SK-N-SH (cell line): ENCODE measurements at regions of chr14 and their contacts with region 1.

Region 1: GRCh38 chr14:21014761-21015190 is 10.1 kb downstream of the NDRG2 start:
- DNase-seq: peak; percentile 75
- H3K4me3 ChIP-seq: no peak overlapping the region; a peak in 1 of 4 replicates
- H3K27ac ChIP-seq: no peak overlapping the region
- H3K4me1 ChIP-seq: no peaks in the 10 kb centered on the region; a peak in 1 of 4 replicates
- H3K27me3 ChIP-seq: peaks cover 15% of the 10 kb centered on the region
- CTCF ChIP-seq: peak; percentile 89
- EP300 ChIP-seq: no peak
- RAD21 ChIP-seq: peak; percentile 96

Region 2: DNA sequence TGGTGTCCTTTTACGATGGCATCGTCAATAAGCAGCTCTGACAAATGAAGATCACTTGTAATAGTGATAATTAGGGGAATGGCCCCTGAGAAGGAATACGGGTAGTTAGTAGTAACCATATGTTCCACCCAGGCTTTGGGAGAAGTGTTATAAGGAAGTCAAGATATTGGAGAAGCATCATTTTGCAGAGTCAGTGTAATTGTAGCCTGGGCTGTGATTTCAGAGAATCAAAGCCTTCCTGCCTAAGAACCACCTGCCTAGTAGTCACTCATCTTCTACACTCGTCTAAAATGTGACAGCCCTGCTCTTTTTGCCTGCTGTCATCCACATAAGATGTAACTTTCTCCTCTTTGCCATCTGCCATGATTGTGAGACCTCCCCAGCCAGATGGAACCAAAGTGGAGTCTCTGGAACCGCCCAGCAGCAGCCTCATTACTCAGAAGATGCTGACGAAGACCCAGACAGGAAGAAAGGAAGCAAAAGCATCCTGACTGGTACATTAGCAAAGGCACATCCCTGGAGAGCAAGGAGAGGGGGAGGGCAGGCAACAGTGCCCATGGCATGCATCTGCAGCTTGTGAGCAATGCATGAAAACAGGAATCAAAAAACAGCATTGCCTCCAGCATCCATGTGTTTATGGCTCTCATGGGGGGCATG is 281.7 kb before region 1 on chr14:
- CTCF ChIA-PET with region 1: no interaction called
- POLR2A ChIA-PET with region 1: no interaction called
- DNase-seq: no peak
- H3K4me3 ChIP-seq: no peak overlapping the region
- H3K27ac ChIP-seq: no peak overlapping the region
- H3K4me1 ChIP-seq: no peaks in the 10 kb centered on the region
- H3K27me3 ChIP-seq: peaks cover 8% of the 10 kb centered on the region; the same call in 1 of the 2 replicates
- CTCF ChIP-seq: no peak
- EP300 ChIP-seq: no peak
- RAD21 ChIP-seq: no peak

Region 3: GRCh38 chr14:20855652-20856291 is 159.0 kb before region 1 on chr14:
- CTCF ChIA-PET with region 1: no interaction called
- POLR2A ChIA-PET with region 1: no interaction called
- DNase-seq: peak; percentile 42
- H3K4me3 ChIP-seq: no peak overlapping the region
- H3K27ac ChIP-seq: no peak overlapping the region
- H3K4me1 ChIP-seq: peaks cover 0 to 3% of the 10 kb centered on the region in 2 experiments; a peak in 1 of 4 replicates
- H3K27me3 ChIP-seq: peaks cover 43% of the 10 kb centered on the region; the same call in 1 of the 2 replicates
- CTCF ChIP-seq: peak; percentile 66
- EP300 ChIP-seq: no peak
- RAD21 ChIP-seq: peak; percentile 60

Region 4: DNA sequence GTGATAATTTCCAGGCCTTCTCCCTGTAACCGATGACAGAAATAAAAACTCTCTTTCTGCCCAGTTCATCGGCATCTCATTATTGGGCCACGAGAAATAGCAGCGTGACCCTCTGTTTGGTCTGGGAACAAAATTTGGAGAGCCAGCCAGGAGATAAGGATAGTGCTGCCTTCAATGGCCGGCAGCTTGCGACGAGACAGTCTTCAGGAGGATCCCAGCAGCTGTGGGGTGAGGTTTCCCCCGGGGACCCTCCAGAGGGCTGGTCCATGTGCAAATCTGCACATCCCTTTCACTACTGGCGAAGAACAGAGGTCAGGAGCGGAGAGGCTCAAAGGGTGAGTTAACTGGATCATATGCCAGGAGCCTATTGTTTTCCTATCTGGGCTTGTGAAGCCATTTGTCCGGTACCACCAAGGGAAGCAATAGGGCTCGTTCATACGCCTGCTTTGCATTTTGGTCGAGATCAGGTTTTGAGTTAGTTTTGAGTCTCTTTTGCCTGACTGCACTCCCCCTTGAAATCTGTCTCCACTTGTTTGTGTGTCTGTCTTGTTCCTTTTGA is 10.9 kb before region 1 on chr14:
- CTCF ChIA-PET with region 1: interaction called, 83 read pairs
- POLR2A ChIA-PET with region 1: no interaction called
- DNase-seq: no peak
- H3K4me3 ChIP-seq: no peak overlapping the region
- H3K27ac ChIP-seq: no peak overlapping the region
- H3K4me1 ChIP-seq: no peaks in the 10 kb centered on the region; a peak in 1 of 4 replicates
- H3K27me3 ChIP-seq: no peaks in the 10 kb centered on the region
- CTCF ChIP-seq: no peak
- EP300 ChIP-seq: no peak
- RAD21 ChIP-seq: no peak

Region 5: GRCh38 chr14:21039585-21040369 is 25.0 kb after region 1 on chr14:
- CTCF ChIA-PET with region 1: interaction called, 248 read pairs
- POLR2A ChIA-PET with region 1: interaction called, 9 read pairs
- DNase-seq: peak; percentile 56
- H3K4me3 ChIP-seq: no peak overlapping the region; a peak in 1 of 4 replicates
- H3K27ac ChIP-seq: no peak overlapping the region
- H3K4me1 ChIP-seq: peaks cover 13 to 20% of the 10 kb centered on the region in 2 experiments; a peak in 3 of 4 replicates
- H3K27me3 ChIP-seq: no peaks in the 10 kb centered on the region; the same call in 1 of the 2 replicates
- CTCF ChIP-seq: peak; percentile 67
- EP300 ChIP-seq: no peak
- RAD21 ChIP-seq: peak; percentile 86

Region 6: GRCh38 chr14:21071225-21072030 is 56.7 kb after region 1 on chr14:
- CTCF ChIA-PET with region 1: interaction called, 54 read pairs
- POLR2A ChIA-PET with region 1: interaction called, 15 read pairs
- DNase-seq: peak; percentile 95
- H3K4me3 ChIP-seq: peak overlapping the region; percentile 81 to 89
- H3K27ac ChIP-seq: peak overlapping the region; percentile 98 to 99
- H3K4me1 ChIP-seq: peaks cover 22 to 37% of the 10 kb centered on the region in 2 experiments
- H3K27me3 ChIP-seq: no peaks in the 10 kb centered on the region
- CTCF ChIP-seq: no peak
- EP300 ChIP-seq: peak in 1 of 2 experiments; percentile 25; a peak in 1 of 4 replicates
- RAD21 ChIP-seq: 0 out of 2 replicates have a peak, but pooled peaks have one; percentile 2

Region 7: DNA sequence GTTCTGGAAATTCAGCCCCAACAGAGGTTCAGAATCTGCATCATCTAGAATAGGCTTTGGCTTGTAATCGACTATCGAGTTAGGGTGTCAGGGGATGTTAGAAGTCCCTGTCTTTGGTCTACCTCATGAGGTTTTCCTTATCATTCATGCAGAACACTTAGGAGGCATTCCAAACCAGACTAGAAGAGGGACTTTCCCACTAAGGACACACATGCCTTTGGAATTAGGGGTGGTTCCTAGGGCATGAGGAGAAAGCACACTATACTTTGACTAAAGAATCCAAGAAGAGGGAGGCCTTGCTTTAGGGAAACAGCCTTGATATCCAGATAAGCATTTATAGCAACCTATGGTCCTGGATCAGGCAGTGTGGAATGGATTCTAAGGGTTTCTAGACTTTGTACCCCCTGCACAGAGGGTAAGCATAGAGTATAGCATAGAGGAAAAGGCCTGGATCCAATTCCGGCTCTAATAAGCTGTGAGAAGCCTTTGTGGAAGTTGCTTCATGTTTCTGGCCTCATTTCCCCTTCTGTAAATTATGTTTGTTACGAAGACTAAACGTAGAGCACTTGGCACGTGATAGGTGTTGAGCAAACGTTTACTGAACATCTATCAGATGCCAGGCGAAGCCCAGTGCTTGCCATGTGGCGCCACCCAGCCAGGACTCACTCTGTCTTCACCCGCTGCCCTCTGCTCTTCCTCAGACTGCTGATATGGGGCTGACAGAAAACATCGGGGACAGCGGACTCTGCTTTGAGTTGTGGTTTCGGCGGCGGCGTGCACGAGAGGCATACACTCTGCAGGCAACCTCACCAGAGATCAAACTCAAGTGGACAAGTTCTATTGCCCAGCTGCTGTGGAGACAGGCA is 70.4 kb after region 1 on chr14:
- CTCF ChIA-PET with region 1: interaction called, 70 read pairs
- POLR2A ChIA-PET with region 1: no interaction called
- DNase-seq: peak; percentile 15
- H3K4me3 ChIP-seq: no peak overlapping the region
- H3K27ac ChIP-seq: peak overlapping the region; percentile 29 to 89
- H3K4me1 ChIP-seq: peaks cover 9 to 24% of the 10 kb centered on the region in 2 experiments; a peak in 3 of 4 replicates
- H3K27me3 ChIP-seq: no peaks in the 10 kb centered on the region
- CTCF ChIP-seq: no peak
- EP300 ChIP-seq: no peak
- RAD21 ChIP-seq: no peak